Ascending aorta (tissue), 2 donors: ENCODE measurements at regions of chr3 and their contacts with region 1.

Region 1: GRCh38 chr3:151976211-151977050 is 103.0 kb downstream of the SUCNR1 start:
- DNase-seq: no peak
- H3K4me3 ChIP-seq: no peak overlapping the region
- H3K27ac ChIP-seq: peak overlapping the region; percentile 12 to 38
- H3K4me1 ChIP-seq: peaks cover 0 to 17% of the 10 kb centered on the region in 2 donors
- H3K27me3 ChIP-seq: no peaks in the 10 kb centered on the region
- CTCF ChIP-seq: no peak

Region 2: GRCh38 chr3:151933234-151933853 is 43.1 kb before region 1 on chr3:
- intact Hi-C with region 1: loop called (anchors 5 kb)
- DNase-seq: no peak
- H3K4me3 ChIP-seq: no peak overlapping the region
- H3K27ac ChIP-seq: no peak overlapping the region
- H3K4me1 ChIP-seq: no peaks in the 10 kb centered on the region
- H3K27me3 ChIP-seq: no peaks in the 10 kb centered on the region
- CTCF ChIP-seq: no peak